Gastrocnemius medialis (tissue), 4 donors: ENCODE measurements at regions of chr1 and their contacts with region 1.

Region 1: DNA sequence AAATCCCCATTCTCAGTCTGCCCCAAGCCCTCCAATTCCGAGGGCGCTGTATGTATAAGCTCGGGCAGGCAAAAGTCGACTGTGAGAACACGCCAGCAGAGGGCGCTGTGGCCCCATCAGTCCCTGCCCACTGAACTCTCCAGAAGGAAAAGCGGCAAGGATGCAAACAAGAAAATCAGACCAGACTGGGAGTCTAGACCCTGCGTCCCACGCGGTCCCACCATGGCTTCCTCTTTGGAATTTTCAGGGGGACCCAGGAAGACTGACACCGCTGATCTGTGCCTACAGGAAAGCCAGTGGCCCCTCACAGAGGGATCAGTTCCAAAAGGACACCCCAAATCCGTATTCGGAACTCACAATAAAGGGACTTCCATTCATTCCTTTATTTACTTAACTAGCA is 19.5 kb downstream of the TEX35 start:
- DNase-seq: peak; percentile 54 to 72
- ATAC-seq: peak; percentile 35 to 60
- H3K4me3 ChIP-seq: no peak overlapping the region
- H3K27ac ChIP-seq: no peak overlapping the region
- H3K4me1 ChIP-seq: peaks cover 4 to 18% of the 10 kb centered on the region in 2 donors
- H3K27me3 ChIP-seq: no peaks in the 10 kb centered on the region
- CTCF ChIP-seq: peak; percentile 76 to 94 (median 88)
- POLR2A ChIP-seq: no peak

Region 2: GRCh38 chr1:178344513-178345082 is 187.8 kb before region 1 on chr1:
- in situ Hi-C with region 1: no loop called
- intact Hi-C with region 1: loop called (anchors 10 kb)
- DNase-seq: no peak
- ATAC-seq: peak; percentile 74 to 76
- H3K4me3 ChIP-seq: peak overlapping the region in 2 of 4 donors; percentile 16 to 19
- H3K27ac ChIP-seq: peak overlapping the region; percentile 76 to 84 (median 82)
- H3K4me1 ChIP-seq: peaks cover 56 to 60% of the 10 kb centered on the region in 2 donors
- H3K27me3 ChIP-seq: no peaks in the 10 kb centered on the region
- CTCF ChIP-seq: peak; percentile 45 to 82 (median 57)
- POLR2A ChIP-seq: no peak

Region 3: GRCh38 chr1:178739285-178740045 is 207.1 kb after region 1 on chr1:
- in situ Hi-C with region 1: loop called in 1 of 4 experiments (anchors 10 kb)
- intact Hi-C with region 1: no loop called
- DNase-seq: no peak
- ATAC-seq: no peak
- H3K4me3 ChIP-seq: no peak overlapping the region
- H3K27ac ChIP-seq: no peak overlapping the region
- H3K4me1 ChIP-seq: no peaks in the 10 kb centered on the region
- H3K27me3 ChIP-seq: no peaks in the 10 kb centered on the region
- CTCF ChIP-seq: no peak
- POLR2A ChIP-seq: no peak

Region 4: GRCh38 chr1:178749581-178750166 is 217.3 kb after region 1 on chr1:
- in situ Hi-C with region 1: loop called (anchors 5 to 10 kb)
- intact Hi-C with region 1: loop called (anchors 1 kb)
- DNase-seq: no peak
- ATAC-seq: no peak
- H3K4me3 ChIP-seq: no peak overlapping the region
- H3K27ac ChIP-seq: no peak overlapping the region
- H3K4me1 ChIP-seq: no peaks in the 10 kb centered on the region
- H3K27me3 ChIP-seq: no peaks in the 10 kb centered on the region
- CTCF ChIP-seq: no peak
- POLR2A ChIP-seq: no peak

Region 5: DNA sequence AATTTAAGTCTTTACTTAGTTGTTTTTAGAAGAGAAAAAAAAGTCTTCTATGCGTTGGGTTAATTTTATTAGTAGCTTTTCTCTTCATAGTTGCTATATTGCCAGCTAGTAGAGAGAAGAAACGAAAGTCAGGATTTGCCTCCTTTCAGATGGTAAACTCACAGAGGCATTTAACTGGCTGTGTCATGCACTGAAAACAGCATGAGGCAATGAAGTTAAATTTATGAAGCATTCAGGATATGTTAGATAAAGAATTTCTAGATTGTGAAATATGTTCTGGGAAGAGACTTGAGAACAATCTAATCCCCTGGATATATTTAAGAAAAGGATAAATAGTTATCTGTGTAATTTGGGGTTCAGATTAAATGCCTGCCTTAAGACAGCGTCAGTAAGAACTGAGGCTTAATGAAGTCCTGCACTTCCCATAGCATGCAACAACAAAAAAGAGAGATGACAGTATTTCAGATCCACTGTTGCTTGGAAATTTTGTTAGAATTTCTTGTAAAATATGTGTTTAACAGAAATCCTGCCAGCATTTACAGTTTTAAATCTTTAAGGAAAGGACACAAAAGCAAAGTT is 336.8 kb after region 1 on chr1:
- in situ Hi-C with region 1: no loop called
- intact Hi-C with region 1: loop called (anchors 5 kb)
- DNase-seq: no peak
- ATAC-seq: peak; percentile 78 to 81
- H3K4me3 ChIP-seq: peak overlapping the region; percentile 54 to 63 (median 58)
- H3K27ac ChIP-seq: peak overlapping the region; percentile 76 to 84 (median 82)
- H3K4me1 ChIP-seq: peaks cover 36 to 49% of the 10 kb centered on the region in 2 donors
- H3K27me3 ChIP-seq: no peaks in the 10 kb centered on the region
- CTCF ChIP-seq: peak in 1 of 5 experiments; percentile 16
- POLR2A ChIP-seq: peak in 1 of 2 donors; percentile 12

Region 6: GRCh38 chr1:180168786-180169639 is 1636.6 kb after region 1 on chr1:
- in situ Hi-C with region 1: no loop called
- intact Hi-C with region 1: loop called (anchors 5 kb)
- DNase-seq: peak in 1 of 2 donors; percentile 78
- ATAC-seq: peak; percentile 16 to 24
- H3K4me3 ChIP-seq: no peak overlapping the region
- H3K27ac ChIP-seq: peak overlapping the region; percentile 89 to 97 (median 96)
- H3K4me1 ChIP-seq: peaks cover 54 to 60% of the 10 kb centered on the region in 2 donors
- H3K27me3 ChIP-seq: no peaks in the 10 kb centered on the region
- CTCF ChIP-seq: peak; percentile 44 to 61 (median 49)
- POLR2A ChIP-seq: no peak